ENCODE measurements at regions of chr17 and their contacts with region 1.

Region 1: DNA sequence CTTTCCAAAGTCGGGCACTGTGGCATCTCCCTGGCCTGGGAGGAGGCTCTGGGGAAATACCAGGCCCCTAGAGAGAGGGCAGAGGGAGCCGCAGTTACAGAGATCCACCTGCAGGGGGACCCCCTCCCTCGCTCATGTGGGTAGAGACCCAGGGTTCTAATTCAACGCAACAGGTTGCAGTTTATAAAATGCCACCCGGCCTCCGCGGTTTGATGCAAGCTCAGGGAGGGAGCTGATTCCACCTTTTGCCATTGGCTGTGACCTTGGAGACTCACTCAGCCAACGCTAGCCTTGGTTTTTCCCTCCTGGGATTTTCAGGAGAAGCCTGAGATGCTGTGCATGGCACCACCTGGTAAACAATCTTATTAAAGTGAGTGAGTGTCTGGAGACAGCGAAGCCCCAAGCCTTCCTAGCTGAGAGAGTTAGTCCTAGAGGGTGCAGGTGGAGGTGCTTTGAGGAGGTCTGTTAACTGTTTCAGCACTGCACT is 12.1 kb downstream of the TTLL6 start:
- DNase-seq: no peak
- H3K4me3 ChIP-seq: no peak overlapping the region
- CTCF ChIP-seq: peak; percentile 91

Region 2: DNA sequence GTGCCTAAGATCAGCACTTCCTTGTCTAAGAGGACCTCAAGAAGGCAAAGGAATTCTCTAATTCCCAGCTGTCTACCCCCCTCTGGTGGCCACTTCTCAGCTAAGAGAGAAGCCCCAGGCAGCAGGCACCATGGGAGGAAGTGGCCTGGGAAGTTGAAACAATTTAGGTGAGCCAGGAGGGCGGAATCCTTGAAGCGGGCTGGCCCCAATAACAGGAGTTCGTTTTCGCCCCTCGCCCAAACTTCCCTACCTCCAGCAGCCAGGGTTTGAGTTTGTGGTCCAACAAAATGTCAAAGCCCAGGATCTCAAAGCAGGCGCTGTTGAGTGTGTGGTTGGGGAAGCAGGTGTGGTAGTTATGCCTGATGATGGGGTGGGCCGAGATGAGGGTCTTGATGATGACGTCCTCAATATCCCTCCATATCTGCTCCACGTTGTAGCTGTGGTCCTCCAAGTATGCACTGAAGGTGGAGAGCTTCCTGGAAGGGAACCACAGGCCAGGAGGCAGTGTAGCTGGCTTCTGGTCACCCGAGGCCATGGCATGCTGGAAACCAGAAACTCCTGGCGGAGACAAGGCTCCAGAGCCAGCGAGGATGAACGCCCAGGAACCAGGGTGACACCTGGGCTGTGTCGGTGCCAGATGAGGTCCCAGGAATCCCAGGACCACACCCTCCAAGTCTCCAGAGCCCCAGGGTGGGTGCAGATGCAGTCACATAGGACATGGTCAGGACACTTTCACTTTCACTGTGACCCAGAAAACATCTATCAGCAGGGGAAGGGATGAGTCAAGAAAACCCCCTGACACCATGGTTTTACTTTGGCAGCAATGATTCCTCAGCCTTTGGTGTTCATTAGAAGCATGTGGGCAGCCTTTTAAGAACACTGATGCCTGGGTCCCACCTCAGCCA is 13.6 kb before region 1 on chr17:
- CTCF ChIA-PET with region 1: interaction called, 61 read pairs
- POLR2A ChIA-PET with region 1: no interaction called
- DNase-seq: peak; percentile 45
- H3K4me3 ChIP-seq: no peak overlapping the region
- CTCF ChIP-seq: peak; percentile 82

Region 3: DNA sequence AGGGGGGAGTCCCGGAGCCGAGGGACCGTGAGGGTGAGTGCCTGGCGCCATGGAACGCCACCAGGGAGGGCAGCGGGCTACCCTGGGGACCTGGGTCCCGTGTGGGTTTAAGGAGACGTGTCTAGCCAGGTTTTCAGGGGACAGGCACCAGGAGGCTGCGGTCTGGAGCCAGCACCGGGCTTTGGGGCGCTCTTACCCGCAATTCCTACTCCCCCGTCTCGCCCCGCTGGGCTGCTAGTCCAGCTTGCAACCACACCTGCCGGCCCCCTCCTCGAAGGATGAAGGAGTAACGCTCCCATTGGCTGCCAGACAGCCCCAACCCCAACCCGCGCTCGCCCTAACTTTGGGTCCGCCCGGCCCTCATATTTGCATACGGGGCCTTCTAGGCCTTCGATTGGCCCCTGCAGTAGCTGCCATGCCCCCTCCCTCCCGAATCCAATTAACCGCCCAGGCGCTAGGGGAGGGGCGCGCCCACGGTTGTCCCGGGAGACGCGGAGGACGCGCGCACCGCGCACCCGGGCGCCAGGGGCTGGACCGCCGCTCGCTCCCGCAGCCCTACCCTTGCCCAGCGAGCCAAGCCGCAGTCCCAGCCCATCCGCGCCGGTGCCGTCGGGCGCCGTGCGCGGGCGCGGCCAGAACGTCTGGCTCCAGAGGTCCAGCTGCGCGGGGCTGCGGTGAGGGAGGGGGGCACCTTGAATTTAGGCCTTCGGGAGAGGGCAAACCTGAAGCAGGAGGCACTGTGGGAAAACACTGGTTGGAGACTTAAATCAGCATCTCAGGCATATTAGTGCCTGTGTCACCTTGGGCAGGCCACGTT is 12.0 kb after region 1 on chr17 and contains the start of gene TTLL6:
- CTCF ChIA-PET with region 1: interaction called, 118 read pairs
- POLR2A ChIA-PET with region 1: no interaction called
- DNase-seq: no peak
- H3K4me3 ChIP-seq: peak within 1 kb of the TSS; percentile 45
- CTCF ChIP-seq: no peak

Region 4: GRCh38 chr17:48830840-48831548 is 26.0 kb after region 1 on chr17 and contains the start of gene CALCOCO2:
- CTCF ChIA-PET with region 1: interaction called, 20 read pairs
- POLR2A ChIA-PET with region 1: no interaction called
- DNase-seq: peak; percentile 42
- H3K4me3 ChIP-seq: peak within 1 kb of the TSS; percentile 100
- CTCF ChIP-seq: no peak

Region 5: DNA sequence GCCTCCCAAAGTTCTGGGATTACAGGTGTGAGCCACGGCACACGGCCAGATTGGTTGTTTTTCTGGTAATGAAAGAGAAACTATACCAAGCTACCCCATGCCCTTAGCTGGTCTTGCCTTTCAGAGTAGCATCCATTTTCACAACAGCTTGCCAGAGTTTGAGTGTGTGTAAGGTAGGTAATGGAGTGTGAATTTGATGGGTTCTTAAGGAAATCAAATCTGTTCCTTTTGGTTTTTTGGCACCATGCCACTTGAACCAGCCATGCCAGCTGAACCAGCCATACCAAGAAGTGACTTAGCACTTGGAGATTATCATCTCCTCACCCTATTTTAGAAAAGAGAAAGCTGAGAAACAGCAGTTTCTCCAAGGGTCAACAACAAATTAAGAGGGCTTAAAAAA is 31.0 kb after region 1 on chr17:
- CTCF ChIA-PET with region 1: interaction called, 20 read pairs
- POLR2A ChIA-PET with region 1: interaction called, 3 read pairs
- DNase-seq: no peak
- H3K4me3 ChIP-seq: no peak overlapping the region
- CTCF ChIP-seq: no peak

Region 6: GRCh38 chr17:48843172-48843900 is 38.4 kb after region 1 on chr17:
- CTCF ChIA-PET with region 1: interaction called, 16 read pairs
- POLR2A ChIA-PET with region 1: no interaction called
- DNase-seq: no peak
- H3K4me3 ChIP-seq: no peak overlapping the region
- CTCF ChIP-seq: no peak